ENCODE measurements at regions of chr16 and their contacts with region 1.

Region 1: DNA sequence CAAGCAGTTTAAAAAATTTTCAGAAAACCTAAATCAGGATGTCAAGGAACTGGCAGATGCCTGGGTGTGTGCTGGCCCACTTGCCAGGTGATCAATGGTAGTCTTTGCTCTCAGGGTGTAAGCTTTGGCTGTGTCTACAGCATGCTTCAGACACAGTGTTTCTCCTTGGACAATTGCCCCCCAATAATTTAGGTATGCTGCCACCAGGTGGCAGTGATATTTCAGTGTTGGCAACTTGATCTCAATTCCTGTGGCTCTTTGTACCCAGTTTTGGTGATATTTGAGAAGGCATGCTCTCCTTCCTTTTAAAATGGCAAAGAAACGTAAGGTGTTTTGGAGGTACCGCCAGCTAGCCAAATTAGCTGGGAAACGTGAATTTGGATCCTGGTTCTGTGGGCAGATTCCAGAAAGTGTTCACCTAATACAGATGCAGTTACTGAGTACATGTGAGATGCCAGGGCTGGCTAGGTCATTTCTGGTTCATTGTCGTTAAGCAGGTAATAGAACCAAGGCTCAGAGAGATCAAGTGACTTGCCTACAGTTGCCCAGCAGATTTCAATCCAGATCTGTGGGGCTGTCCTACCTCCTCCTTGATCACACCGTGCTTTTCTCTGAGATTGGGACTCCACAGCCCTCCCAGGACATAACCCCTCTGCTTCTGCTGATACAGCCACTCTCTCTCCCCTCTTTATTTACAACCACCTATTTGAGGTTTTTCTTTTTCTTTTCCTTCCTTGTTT is 155.6 kb upstream of the PLCG2 start:
- DNase-seq: peak; percentile 89
- H3K4me3 Mint-ChIP-seq: no peak overlapping the region
- H3K27ac Mint-ChIP-seq: peak overlapping the region; percentile 68
- H3K4me1 Mint-ChIP-seq: peaks cover 26% of the 10 kb centered on the region
- H3K27me3 Mint-ChIP-seq: no peaks in the 10 kb centered on the region

Region 2: GRCh38 chr16:81366316-81366932 is 257.1 kb before region 1 on chr16:
- intact Hi-C with region 1: loop called (anchors 1 kb)
- DNase-seq: peak; percentile 78
- H3K4me3 Mint-ChIP-seq: no peak overlapping the region
- H3K27ac Mint-ChIP-seq: no peak overlapping the region
- H3K4me1 Mint-ChIP-seq: peaks cover 3% of the 10 kb centered on the region
- H3K27me3 Mint-ChIP-seq: no peaks in the 10 kb centered on the region

Region 3: DNA sequence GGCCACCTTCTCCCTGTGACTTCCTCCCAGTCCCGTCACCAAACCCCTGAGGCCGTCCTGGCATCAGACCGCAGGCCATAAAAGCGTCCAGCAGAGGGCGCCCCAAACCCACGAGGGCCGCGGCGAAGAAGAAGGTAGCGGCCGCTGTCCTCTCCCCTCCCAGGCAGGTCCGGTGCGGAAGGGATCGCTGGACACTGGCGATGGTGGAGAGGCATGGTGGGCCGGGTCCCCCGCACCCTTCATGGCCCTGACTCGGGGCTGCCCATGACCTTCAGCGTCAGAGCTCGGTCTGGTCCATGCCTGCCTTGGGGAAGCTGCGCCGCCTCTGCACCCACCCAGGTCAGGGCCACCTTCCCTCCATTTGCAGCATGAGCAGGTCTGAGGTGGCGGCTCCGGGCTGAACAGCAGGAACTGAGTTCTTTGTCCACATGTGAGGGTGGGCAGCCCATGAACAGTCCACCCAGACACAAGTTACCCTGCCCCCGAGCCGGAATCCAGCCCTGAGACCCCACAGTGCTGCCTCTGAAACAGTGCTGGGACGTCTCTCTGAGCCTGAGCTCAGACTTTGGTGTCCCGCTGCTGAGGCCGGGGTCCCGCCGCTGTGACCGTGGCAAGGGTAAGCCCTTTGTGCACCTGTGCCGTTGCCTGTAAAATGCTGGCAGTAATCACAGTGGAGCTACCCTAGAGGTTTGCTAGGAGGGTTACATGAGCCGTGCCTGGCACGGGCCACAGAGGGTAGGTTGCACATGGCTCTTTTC is 219.7 kb before region 1 on chr16:
- intact Hi-C with region 1: loop called (anchors 5 kb)
- DNase-seq: peak; percentile 95
- H3K4me3 Mint-ChIP-seq: peak overlapping the region; percentile 39
- H3K27ac Mint-ChIP-seq: no peak overlapping the region
- H3K4me1 Mint-ChIP-seq: peaks cover 2% of the 10 kb centered on the region
- H3K27me3 Mint-ChIP-seq: peaks cover 1% of the 10 kb centered on the region

Region 4: GRCh38 chr16:81595604-81596292 is 27.8 kb before region 1 on chr16:
- intact Hi-C with region 1: loop called (anchors 1 kb)
- DNase-seq: no peak
- H3K4me3 Mint-ChIP-seq: no peak overlapping the region
- H3K27ac Mint-ChIP-seq: peak overlapping the region; percentile 88
- H3K4me1 Mint-ChIP-seq: peaks cover 20% of the 10 kb centered on the region
- H3K27me3 Mint-ChIP-seq: no peaks in the 10 kb centered on the region

Region 5: GRCh38 chr16:81696961-81697615 is 73.6 kb after region 1 on chr16:
- intact Hi-C with region 1: loop called (anchors 1 kb)
- DNase-seq: peak; percentile 86
- H3K4me3 Mint-ChIP-seq: no peak overlapping the region
- H3K27ac Mint-ChIP-seq: no peak overlapping the region
- H3K4me1 Mint-ChIP-seq: peaks cover 11% of the 10 kb centered on the region
- H3K27me3 Mint-ChIP-seq: no peaks in the 10 kb centered on the region

Region 6: DNA sequence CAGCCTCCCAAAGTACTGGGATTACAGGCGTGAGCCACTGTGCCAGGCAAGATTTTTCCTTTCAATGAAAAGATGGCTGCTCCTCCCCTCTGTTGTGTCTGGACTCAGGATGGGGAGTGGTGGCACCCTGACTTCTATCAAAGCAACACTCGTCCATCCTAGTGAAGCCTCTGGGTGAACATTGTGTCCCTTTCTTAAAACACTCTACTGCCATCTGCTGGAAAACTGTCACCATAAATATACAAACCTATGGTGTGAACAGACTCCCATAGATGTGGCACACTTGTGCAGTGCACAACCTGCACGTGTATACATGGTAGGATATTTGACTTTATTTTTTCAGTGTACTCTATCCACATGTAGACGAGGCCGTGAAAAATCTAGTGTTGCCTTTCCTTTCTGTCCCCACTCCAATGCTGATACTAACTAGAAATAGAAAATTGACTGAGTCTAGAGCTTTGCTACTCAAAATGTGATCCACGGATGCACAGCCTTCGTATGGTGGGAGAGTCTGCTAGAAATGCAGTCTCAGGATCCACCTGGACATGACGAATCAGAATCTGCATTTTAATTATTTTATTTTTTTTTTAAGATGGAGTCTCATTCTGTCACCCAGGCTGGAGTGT is 99.7 kb after region 1 on chr16:
- intact Hi-C with region 1: loop called (anchors 1 kb)
- DNase-seq: peak; percentile 90
- H3K4me3 Mint-ChIP-seq: no peak overlapping the region
- H3K27ac Mint-ChIP-seq: no peak overlapping the region
- H3K4me1 Mint-ChIP-seq: peaks cover 21% of the 10 kb centered on the region
- H3K27me3 Mint-ChIP-seq: peaks cover 3% of the 10 kb centered on the region

Region 7: GRCh38 chr16:81855552-81856153 is 232.1 kb after region 1 on chr16:
- intact Hi-C with region 1: no loop called
- DNase-seq: no peak
- H3K4me3 Mint-ChIP-seq: no peak overlapping the region
- H3K27ac Mint-ChIP-seq: no peak overlapping the region
- H3K4me1 Mint-ChIP-seq: no peaks in the 10 kb centered on the region
- H3K27me3 Mint-ChIP-seq: peaks cover 2% of the 10 kb centered on the region